ENCODE measurements at regions of chr4 and their contacts with region 1.

Region 1: GRCh38 chr4:70901984-70902576 is at the start of gene MOB1B:
- DNase-seq: peak; percentile 89 to 93 (median 93)
- ATAC-seq: peak; percentile 93 to 98 (median 98)
- H3K4me3 ChIP-seq: peak within 1 kb of the TSS; percentile 70 to 98 (median 84)
- H3K27ac ChIP-seq: peak within 1 kb of the TSS; percentile 75 to 94 (median 92)
- H3K4me1 ChIP-seq: peaks cover 0 to 26% (median 9%) of the 10 kb centered on the region in 12 donors
- H3K27me3 ChIP-seq: no peaks in the 10 kb centered on the region
- CTCF ChIP-seq: peak in 10 of 12 donors; percentile 10 to 65 (median 46)
- POLR2A ChIP-seq: peak in 1 of 2 donors; percentile 61
- total RNA-seq, gene MOB1B: 11.1 to 22.9 (median 18.6) TPM

Region 2: DNA sequence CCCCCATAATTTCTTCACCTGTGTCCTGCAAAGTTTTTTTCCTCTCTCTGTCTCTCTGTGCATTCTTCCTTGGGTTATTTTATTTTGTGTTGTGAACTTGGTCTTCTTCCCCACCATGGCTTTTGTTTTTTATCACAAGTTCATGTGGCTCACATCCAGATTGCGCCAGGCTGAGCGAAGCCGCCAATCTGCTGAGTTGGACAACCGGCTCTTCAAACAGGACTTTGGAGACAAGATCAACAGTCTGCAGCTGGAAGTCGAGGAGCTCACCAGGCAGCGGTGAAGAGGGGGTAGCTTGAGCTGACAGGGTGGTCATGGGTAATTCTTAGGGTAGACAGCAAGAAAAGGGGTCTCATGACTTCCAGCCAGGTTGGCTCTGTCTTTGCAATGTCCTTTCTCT is 108.5 kb before region 1 on chr4:
- intact Hi-C with region 1: no loop called
- DNase-seq: no peak
- ATAC-seq: no peak
- H3K4me3 ChIP-seq: no peak overlapping the region
- H3K27ac ChIP-seq: no peak overlapping the region
- H3K4me1 ChIP-seq: no peaks in the 10 kb centered on the region
- H3K27me3 ChIP-seq: no peaks in the 10 kb centered on the region
- CTCF ChIP-seq: no peak
- POLR2A ChIP-seq: no peak

Region 3: GRCh38 chr4:70993181-70994068 is 91.3 kb after region 1 on chr4 and contains the start of gene DCK:
- intact Hi-C with region 1: loop called in 7 of 10 experiments (anchors 1 to 10 kb)
- DNase-seq: peak; percentile 92 to 96 (median 93)
- ATAC-seq: peak; percentile 96 to 99 (median 98)
- H3K4me3 ChIP-seq: peak within 1 kb of the TSS; percentile 40 to 93 (median 81)
- H3K27ac ChIP-seq: peak within 1 kb of the TSS; percentile 71 to 95 (median 87)
- H3K4me1 ChIP-seq: peaks cover 0 to 54% (median 18%) of the 10 kb centered on the region in 12 donors
- H3K27me3 ChIP-seq: no peaks in the 10 kb centered on the region
- CTCF ChIP-seq: peak in 1 of 12 donors; percentile 29
- POLR2A ChIP-seq: peak in 1 of 2 donors; percentile 72
- total RNA-seq, gene DCK: 4.6 to 12.6 (median 6.8) TPM